ENCODE measurements at regions of chr2 and their contacts with region 1.

Region 1: GRCh38 chr2:45935791-45936622 is 284.5 kb downstream of the PRKCE start:
- DNase-seq: peak; percentile 91
- H3K4me3 ChIP-seq: no peak overlapping the region
- H3K27ac ChIP-seq: peak overlapping the region; percentile 52
- H3K4me1 ChIP-seq: peaks cover 35% of the 10 kb centered on the region
- H3K27me3 ChIP-seq: no peaks in the 10 kb centered on the region
- CTCF ChIP-seq: peak; percentile 85

Region 2: GRCh38 chr2:45643543-45644542 is 292.2 kb before region 1 on chr2:
- intact Hi-C with region 1: loop called (anchors 5 kb)
- DNase-seq: peak; percentile 70
- H3K4me3 ChIP-seq: peak overlapping the region; percentile 71
- H3K27ac ChIP-seq: no peak overlapping the region
- H3K4me1 ChIP-seq: peaks cover 27% of the 10 kb centered on the region
- H3K27me3 ChIP-seq: peaks cover 18% of the 10 kb centered on the region
- CTCF ChIP-seq: peak; percentile 98

Region 3: GRCh38 chr2:45778720-45779171 is 157.3 kb before region 1 on chr2:
- intact Hi-C with region 1: loop called (anchors 5 kb)
- DNase-seq: peak; percentile 41
- H3K4me3 ChIP-seq: no peak overlapping the region
- H3K27ac ChIP-seq: no peak overlapping the region
- H3K4me1 ChIP-seq: peaks cover 53% of the 10 kb centered on the region
- H3K27me3 ChIP-seq: no peaks in the 10 kb centered on the region
- CTCF ChIP-seq: peak; percentile 84

Region 4: GRCh38 chr2:45797451-45798230 is 138.4 kb before region 1 on chr2:
- intact Hi-C with region 1: no loop called
- DNase-seq: no peak
- H3K4me3 ChIP-seq: no peak overlapping the region
- H3K27ac ChIP-seq: no peak overlapping the region
- H3K4me1 ChIP-seq: peaks cover 24% of the 10 kb centered on the region
- H3K27me3 ChIP-seq: no peaks in the 10 kb centered on the region
- CTCF ChIP-seq: no peak

Measured in left ventricle myocardium inferior (tissue), 1 donor.